ENCODE measurements at regions of chr3 and their contacts with region 1.

Region 1: GRCh38 chr3:142929109-142929508 is 34.4 kb downstream of the PAQR9 start:
- DNase-seq: peak; percentile 42
- CTCF ChIP-seq: peak; percentile 57

Region 2: GRCh38 chr3:142947799-142948575 is 18.9 kb after region 1 on chr3:
- CTCF ChIA-PET with region 1: interaction called, 18 read pairs
- POLR2A ChIA-PET with region 1: no interaction called
- DNase-seq: no peak
- CTCF ChIP-seq: no peak

Region 3: GRCh38 chr3:142958707-142959106 is 29.6 kb after region 1 on chr3:
- CTCF ChIA-PET with region 1: interaction called, 18 read pairs
- POLR2A ChIA-PET with region 1: no interaction called
- DNase-seq: no peak
- CTCF ChIP-seq: no peak

Region 4: DNA sequence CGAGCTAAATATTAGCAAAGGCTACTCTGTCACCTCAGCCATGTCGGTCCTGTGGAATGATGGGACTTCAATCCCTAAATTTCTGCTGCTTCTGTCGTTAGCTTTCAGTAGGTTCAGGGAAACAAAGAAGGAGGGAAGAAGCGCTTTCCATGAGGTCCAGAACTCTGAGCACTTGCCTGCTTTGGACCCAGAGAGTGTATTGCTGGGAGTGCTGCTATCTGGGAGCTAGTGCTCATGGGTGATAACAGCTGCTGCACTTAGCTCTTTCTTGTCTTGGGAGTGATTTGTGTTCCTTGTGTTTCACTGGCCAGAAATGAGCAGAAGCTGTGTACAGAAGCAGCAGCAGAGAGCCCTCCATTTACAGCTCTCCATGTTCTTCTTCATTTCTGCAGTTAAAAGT is 1412.4 kb after region 1 on chr3:
- CTCF ChIA-PET with region 1: no interaction called
- POLR2A ChIA-PET with region 1: no interaction called
- DNase-seq: no peak
- CTCF ChIP-seq: no peak